ENCODE measurements at regions of chr6 and their contacts with region 1.

Region 1: DNA sequence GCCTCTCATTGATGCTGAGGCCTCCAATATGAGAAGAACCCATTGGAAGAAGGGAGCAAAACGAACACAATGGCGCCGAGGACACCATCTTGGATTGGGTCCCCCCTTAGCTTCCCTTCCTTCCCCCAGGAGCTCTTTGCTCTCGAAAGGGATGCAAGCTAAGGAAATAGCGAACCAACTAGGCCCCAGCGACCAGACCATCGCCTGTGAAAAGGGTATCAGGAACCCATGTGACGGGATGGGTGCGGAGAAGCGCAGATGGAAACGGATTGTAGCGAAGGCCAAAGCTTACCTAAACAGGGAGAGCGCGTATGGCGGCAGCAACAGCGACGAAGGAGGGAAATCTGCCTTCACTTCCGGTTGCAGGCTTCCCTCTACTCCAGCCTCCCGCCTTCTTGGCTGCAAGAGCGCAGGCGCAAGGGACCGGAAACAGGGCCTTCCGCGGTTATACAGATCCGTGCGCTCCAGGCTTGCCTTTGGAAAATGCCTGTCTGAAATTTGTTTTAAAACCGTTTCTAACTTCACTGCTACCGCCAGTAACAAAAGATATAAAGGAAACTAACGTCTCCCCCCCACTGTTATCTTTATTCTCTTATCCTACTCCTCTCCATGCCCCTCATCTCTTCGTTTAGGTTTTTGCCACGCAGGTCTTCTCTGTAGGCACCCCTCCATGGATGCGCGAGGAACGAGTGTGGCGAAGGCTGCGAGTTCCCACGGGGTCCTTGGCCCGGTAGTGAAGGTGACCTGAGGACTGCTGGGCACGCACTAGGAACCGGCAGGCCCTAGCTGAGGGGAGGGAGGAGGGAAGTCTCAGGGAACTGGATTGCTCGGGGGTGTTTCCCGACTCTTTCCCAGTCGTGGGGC is at the start of gene DDX39B:
- DNase-seq: peak; percentile 94
- H3K4me3 Mint-ChIP-seq: peak within 1 kb of the TSS; percentile 89
- H3K27ac Mint-ChIP-seq: peak within 1 kb of the TSS; percentile 75
- H3K4me1 Mint-ChIP-seq: peaks cover 52% of the 10 kb centered on the region
- H3K27me3 Mint-ChIP-seq: no peaks in the 10 kb centered on the region
- total RNA-seq, gene DDX39B: 427 to 434 TPM

Region 2: GRCh38 chr6:31321820-31322219 is 220.1 kb before region 1 on chr6:
- CTCF ChIA-PET with region 1: no interaction called
- POLR2A ChIA-PET with region 1: no interaction called
- DNase-seq: no peak
- H3K4me3 Mint-ChIP-seq: no peak overlapping the region
- H3K27ac Mint-ChIP-seq: no peak overlapping the region
- H3K4me1 Mint-ChIP-seq: no peaks in the 10 kb centered on the region
- H3K27me3 Mint-ChIP-seq: peaks cover 56% of the 10 kb centered on the region

Region 3: GRCh38 chr6:31473780-31474725 is 67.8 kb before region 1 on chr6:
- CTCF ChIA-PET with region 1: no interaction called
- POLR2A ChIA-PET with region 1: no interaction called
- DNase-seq: no peak
- H3K4me3 Mint-ChIP-seq: no peak overlapping the region
- H3K27ac Mint-ChIP-seq: no peak overlapping the region
- H3K4me1 Mint-ChIP-seq: peaks cover 43% of the 10 kb centered on the region
- H3K27me3 Mint-ChIP-seq: no peaks in the 10 kb centered on the region

Region 4: DNA sequence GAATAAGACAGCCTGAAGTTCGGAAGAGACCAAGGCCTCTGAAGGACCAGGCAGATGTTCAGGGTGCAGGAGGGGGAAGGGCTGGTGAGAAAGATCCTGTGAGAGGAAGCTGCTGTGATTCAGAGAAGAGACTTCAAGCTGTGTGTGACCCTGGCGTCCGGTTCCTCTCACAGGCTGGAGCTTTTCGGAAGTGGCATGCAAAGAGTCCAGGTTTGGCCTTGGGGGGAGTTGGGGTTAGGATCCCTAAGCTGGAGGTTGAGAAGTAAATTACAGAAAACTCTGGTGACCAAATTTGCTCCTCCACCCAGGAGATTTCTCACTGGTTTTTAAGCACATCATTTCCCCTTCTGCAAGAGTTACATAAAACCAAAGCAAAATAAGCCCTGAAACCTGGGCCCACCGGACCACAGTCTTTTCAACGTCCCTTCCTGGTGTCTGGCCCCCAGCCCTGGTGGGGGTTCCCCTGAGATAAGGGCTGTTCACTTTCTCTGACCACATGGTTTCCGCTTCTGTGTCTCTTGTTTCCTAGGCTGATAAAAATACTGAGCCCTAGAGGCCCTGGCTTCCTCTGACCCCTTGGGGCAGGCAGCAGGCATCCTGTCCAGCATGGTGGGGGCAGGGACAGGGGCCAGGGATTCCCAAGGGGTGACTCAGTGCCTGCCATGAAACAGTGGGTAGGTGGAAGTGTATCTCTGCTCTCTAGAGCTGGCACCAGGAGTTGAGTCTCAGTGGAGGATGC is 18.2 kb after region 1 on chr6:
- CTCF ChIA-PET with region 1: interaction called, 4 read pairs
- POLR2A ChIA-PET with region 1: interaction called, 20 read pairs
- DNase-seq: peak; percentile 67
- H3K4me3 Mint-ChIP-seq: peak overlapping the region; percentile 66
- H3K27ac Mint-ChIP-seq: peak overlapping the region; percentile 61
- H3K4me1 Mint-ChIP-seq: peaks cover 69% of the 10 kb centered on the region
- H3K27me3 Mint-ChIP-seq: peaks cover 30% of the 10 kb centered on the region

Region 5: GRCh38 chr6:31580807-31581433 is 39.0 kb after region 1 on chr6:
- CTCF ChIA-PET with region 1: interaction called, 400 read pairs
- POLR2A ChIA-PET with region 1: interaction called, 267 read pairs
- DNase-seq: peak; percentile 89
- H3K4me3 Mint-ChIP-seq: peak overlapping the region; percentile 91
- H3K27ac Mint-ChIP-seq: peak overlapping the region; percentile 94
- H3K4me1 Mint-ChIP-seq: peaks cover 58% of the 10 kb centered on the region
- H3K27me3 Mint-ChIP-seq: no peaks in the 10 kb centered on the region

Region 6: GRCh38 chr6:31619805-31620585 is 78.1 kb after region 1 on chr6:
- CTCF ChIA-PET with region 1: interaction called, 3 read pairs
- POLR2A ChIA-PET with region 1: interaction called, 10 read pairs
- DNase-seq: peak; percentile 98
- H3K4me3 Mint-ChIP-seq: peak overlapping the region; percentile 81
- H3K27ac Mint-ChIP-seq: peak overlapping the region; percentile 95
- H3K4me1 Mint-ChIP-seq: peaks cover 50% of the 10 kb centered on the region
- H3K27me3 Mint-ChIP-seq: no peaks in the 10 kb centered on the region

Measured in activated CD4-positive, alpha-beta memory T cell treated with anti-CD3 and anti-CD28 coated beads, Interleukin-2, amount 10 ng/mL, durations not matched to agents 7 days and 5 days (primary cell).